Cardiac septum (tissue), 1 donor: ENCODE measurements at regions of chr11 and their contacts with region 1.

Region 1: GRCh38 chr11:1546536-1547400 is 25.3 kb downstream of the DUSP8 start:
- DNase-seq: peak; percentile 73

Region 2: GRCh38 chr11:1559119-1559951 is 12.6 kb after region 1 on chr11:
- intact Hi-C with region 1: loop called (anchors 1 kb)
- DNase-seq: peak; percentile 92

Region 3: DNA sequence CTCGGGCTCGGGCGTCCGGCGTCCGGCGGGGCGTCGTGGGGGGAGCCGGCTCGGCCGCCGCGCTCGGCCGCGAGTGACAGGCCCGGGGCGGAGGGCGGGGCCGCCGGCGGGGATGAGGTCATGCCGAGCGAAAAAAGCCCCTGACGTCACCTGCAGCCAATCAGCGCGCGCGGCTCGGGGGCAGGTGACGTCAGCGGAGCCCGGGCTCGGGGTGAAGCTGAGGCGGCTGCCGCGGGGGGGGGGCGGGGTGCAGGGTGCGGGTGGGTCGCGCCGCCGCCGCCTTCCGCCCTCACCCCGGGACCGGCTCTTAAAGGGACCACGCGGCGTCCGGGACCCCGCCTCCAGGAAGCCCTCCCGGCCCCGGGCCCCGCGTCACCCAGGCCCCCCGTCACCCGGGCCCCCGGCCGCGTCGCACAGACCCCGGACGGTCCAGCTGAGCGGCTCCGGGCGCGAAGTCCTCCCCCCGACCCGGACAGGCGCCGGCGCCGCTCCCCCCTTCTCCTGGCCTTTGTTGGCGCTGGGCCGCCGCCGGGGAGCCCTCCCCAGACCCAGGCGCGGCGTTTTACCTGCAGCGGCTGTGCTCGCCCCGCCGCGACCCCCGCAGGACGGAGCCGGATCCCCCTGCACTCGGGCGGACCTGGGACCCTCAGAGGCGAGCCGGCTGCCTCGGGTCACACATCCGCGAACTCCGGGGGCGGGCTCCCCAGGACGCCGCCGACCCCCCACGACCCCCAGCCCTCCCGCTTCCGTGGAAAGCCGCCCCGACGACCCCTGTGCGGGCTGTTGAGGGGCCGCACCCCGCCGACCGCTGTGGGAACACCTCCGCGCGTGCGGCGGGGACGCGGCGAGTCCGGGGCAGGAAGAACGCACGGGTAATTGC is 25.7 kb after region 1 on chr11 and contains the start of gene DUSP8:
- intact Hi-C with region 1: loop called (anchors 1 kb)
- DNase-seq: peak; percentile 95
- total RNA-seq, gene DUSP8: 36.9 TPM

Region 4: DNA sequence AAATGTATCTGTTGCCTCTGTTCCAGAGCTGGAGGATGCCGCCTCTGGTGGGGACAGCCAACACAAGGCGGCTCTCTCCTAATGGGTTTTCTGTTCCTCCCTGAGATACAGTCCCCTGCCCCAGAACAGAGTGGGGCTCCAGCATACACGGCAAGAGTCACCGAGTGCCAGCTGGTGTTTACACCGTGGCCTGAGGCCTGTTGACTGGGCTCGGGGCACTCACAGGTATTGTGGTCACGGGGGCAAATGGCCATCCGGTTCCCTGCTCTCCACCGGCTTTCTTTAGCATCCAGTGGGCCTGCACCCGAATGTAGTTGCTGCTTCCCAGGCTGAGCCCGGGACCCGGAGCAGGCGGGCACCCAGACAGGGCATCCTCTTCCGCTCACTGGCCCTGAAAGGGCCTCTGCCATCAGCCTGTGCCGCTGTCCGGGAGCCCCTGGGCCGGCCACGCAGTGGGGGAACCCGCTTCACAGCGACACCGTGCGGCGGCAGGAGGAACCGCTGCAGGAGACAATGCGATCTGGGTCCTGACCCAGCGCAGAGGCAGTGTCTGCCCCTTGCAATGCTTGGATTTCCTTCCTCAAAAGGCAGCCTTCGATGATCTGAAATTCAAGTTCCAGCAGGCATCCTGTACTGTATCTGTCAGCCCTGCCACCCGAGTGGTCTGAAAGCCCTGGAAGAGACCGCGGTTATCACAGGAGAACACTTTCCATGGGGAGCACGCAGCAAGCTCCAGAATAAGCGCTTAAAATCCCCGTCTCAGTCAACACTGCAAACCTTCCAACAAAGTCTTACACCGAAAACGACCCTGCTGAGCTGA is 81.9 kb after region 1 on chr11:
- intact Hi-C with region 1: loop called (anchors 10 kb)
- DNase-seq: no peak